Activated naive CD4-positive, alpha-beta T cell treated with anti-CD3 and anti-CD28 coated beads for 36 hours (primary cell): ENCODE measurements at regions of chr5 and their contacts with region 1.

Region 1: DNA sequence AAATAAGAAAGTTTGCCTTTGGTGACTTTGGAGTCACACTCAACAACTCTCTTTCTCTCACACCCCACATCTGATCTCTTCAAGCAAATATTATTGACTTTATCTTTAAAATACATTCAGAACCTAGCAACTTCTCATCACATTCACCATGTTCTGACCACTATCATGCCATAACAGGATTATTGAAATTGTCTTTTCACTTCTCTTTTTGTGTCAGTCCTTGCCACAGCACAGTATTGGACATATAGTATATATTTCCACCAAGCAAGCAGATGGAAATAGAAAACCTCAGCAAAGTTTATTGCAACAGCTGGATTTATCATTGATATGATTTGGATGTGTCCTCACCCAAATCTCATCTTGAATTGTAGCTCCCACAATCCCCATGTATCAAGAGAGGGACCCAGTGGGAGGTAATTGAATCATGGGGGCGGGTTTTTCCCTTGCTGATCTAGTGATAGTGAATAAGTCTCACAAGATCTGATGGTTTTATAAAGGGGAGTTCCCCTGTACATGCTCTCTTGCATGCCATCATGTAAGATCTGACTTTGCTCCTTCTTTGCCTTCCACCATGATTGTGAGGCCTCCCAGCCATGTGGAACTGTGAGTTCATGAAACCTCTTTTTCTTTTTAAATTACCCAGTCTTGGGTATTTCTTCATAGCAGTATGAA is 26.9 kb upstream of the ITGA1 start:
- DNase-seq: peak; percentile 70
- H3K4me3 Mint-ChIP-seq: no peak overlapping the region
- H3K27ac Mint-ChIP-seq: no peak overlapping the region
- H3K4me1 Mint-ChIP-seq: peaks cover 16% of the 10 kb centered on the region
- H3K27me3 Mint-ChIP-seq: no peaks in the 10 kb centered on the region

Region 2: GRCh38 chr5:52725065-52725746 is 35.6 kb before region 1 on chr5:
- CTCF ChIA-PET with region 1: no interaction called
- intact Hi-C with region 1: loop called (anchors 1 kb)
- DNase-seq: peak; percentile 78
- H3K4me3 Mint-ChIP-seq: no peak overlapping the region
- H3K27ac Mint-ChIP-seq: peak overlapping the region; percentile 27
- H3K4me1 Mint-ChIP-seq: peaks cover 37% of the 10 kb centered on the region
- H3K27me3 Mint-ChIP-seq: no peaks in the 10 kb centered on the region

Region 3: GRCh38 chr5:52743970-52744369 is 16.9 kb before region 1 on chr5:
- CTCF ChIA-PET with region 1: no interaction called
- intact Hi-C with region 1: loop called (anchors 1 kb)
- DNase-seq: peak; percentile 66
- H3K4me3 Mint-ChIP-seq: no peak overlapping the region
- H3K27ac Mint-ChIP-seq: peak overlapping the region; percentile 32
- H3K4me1 Mint-ChIP-seq: peaks cover 44% of the 10 kb centered on the region
- H3K27me3 Mint-ChIP-seq: no peaks in the 10 kb centered on the region

Region 4: DNA sequence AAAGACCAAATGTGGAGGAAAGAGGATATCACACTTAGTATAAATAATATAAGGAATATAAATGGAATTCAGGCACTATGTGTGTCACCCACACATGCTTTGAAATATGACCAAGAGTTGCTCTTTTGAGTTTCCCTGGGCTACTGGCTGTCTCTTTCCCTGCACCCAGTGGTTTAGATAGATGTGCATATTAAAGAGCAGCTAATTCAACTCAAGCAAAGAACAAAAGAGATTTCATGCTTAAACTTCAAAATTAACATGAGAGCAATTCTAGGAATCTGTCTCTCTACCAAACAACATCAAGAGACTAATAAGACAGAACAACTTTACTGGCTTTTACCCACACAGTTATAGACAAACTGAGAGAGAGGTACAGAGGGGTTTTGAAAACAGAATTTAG is 11.2 kb before region 1 on chr5:
- CTCF ChIA-PET with region 1: no interaction called
- intact Hi-C with region 1: loop called (anchors 1 kb)
- DNase-seq: no peak
- H3K4me3 Mint-ChIP-seq: no peak overlapping the region
- H3K27ac Mint-ChIP-seq: no peak overlapping the region
- H3K4me1 Mint-ChIP-seq: peaks cover 11% of the 10 kb centered on the region
- H3K27me3 Mint-ChIP-seq: no peaks in the 10 kb centered on the region

Region 5: GRCh38 chr5:52771343-52772039 is 10.7 kb after region 1 on chr5:
- CTCF ChIA-PET with region 1: interaction called, 3 read pairs
- intact Hi-C with region 1: loop called (anchors 1 kb)
- DNase-seq: peak; percentile 63
- H3K4me3 Mint-ChIP-seq: no peak overlapping the region
- H3K27ac Mint-ChIP-seq: no peak overlapping the region
- H3K4me1 Mint-ChIP-seq: peaks cover 46% of the 10 kb centered on the region
- H3K27me3 Mint-ChIP-seq: no peaks in the 10 kb centered on the region

Region 6: DNA sequence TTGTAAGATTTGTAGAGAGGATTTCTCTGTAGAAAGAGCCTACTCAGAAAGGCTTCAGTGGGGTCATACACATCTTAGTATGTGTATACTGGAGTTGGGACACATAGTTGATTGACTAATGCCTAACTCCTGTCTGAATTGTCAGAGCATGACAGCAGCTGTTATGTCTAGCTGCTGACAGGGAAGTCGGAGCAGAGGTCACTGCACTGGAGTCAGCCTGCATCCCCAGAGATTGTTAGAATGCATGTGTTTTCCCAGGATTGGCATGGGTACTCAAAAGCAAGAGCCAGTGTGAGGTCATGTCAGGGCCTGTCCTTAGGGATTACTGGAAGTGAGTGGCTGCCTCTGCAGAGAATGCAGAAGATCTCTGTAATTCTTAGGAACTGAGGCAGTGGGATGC is 109.6 kb after region 1 on chr5:
- CTCF ChIA-PET with region 1: no interaction called
- intact Hi-C with region 1: no loop called
- DNase-seq: no peak
- H3K4me3 Mint-ChIP-seq: no peak overlapping the region
- H3K27ac Mint-ChIP-seq: no peak overlapping the region
- H3K4me1 Mint-ChIP-seq: no peaks in the 10 kb centered on the region
- H3K27me3 Mint-ChIP-seq: no peaks in the 10 kb centered on the region